B cell (primary cell): ENCODE measurements at regions of chr1 and their contacts with region 1.

Region 1: DNA sequence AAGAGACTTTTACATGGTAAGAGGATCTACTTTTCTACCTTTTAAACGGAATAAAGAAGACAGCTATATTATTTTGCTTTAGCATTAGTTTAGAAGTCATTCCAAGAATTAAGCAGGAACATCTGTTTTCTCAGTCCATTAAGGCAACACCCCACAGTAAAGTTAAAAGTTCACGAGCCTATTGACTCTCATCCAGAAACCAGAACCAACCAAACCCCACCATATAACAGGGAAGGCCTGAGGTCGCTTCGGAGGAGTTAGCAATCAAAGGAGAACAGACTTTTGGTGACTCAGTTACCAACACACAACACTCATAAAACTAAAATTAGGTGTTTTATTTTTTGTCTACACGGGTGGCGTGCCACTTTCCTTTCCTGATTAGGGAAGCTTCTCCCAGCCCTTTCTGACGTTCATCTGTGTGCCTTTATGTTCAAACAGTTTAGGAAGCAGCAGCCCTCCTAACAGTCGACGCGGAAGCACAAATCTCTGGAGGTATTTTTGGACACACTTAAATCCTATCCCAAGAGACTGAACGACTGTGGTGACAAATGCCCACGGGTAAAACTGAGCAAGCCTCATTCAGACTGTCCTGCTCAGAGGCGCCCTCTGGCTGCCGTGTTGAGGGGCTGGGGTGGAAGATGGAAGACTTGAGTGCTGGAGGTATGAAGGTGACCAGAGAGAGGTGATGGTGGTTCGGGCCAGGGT is 8.6 kb upstream of the PLA2G2C start:
- DNase-seq: peak; percentile 76
- ATAC-seq: peak; percentile 91
- H3K4me3 ChIP-seq: no peak overlapping the region
- H3K4me3 Mint-ChIP-seq: peak overlapping the region; percentile 17
- H3K27ac ChIP-seq: no peak overlapping the region
- H3K27ac Mint-ChIP-seq: no peak overlapping the region
- H3K4me1 ChIP-seq: peaks cover 4 to 5% of the 10 kb centered on the region in 2 donors
- H3K4me1 Mint-ChIP-seq: peaks cover 6% of the 10 kb centered on the region
- H3K27me3 ChIP-seq: peaks cover 0 to 30% (median 8%) of the 10 kb centered on the region in 4 experiments
- H3K27me3 Mint-ChIP-seq: peaks cover 34% of the 10 kb centered on the region
- CTCF ChIP-seq: peak; percentile 93

Region 2: GRCh38 chr1:19547814-19548213 is 647.1 kb before region 1 on chr1:
- CTCF ChIA-PET with region 1: no interaction called
- POLR2A ChIA-PET with region 1: no interaction called
- intact Hi-C with region 1: no loop called
- DNase-seq: no peak
- ATAC-seq: no peak
- H3K4me3 ChIP-seq: no peak overlapping the region
- H3K4me3 Mint-ChIP-seq: no peak overlapping the region
- H3K27ac ChIP-seq: no peak overlapping the region
- H3K27ac Mint-ChIP-seq: no peak overlapping the region
- H3K4me1 ChIP-seq: no peaks in the 10 kb centered on the region
- H3K4me1 Mint-ChIP-seq: no peaks in the 10 kb centered on the region
- H3K27me3 ChIP-seq: peaks cover 0 to 4% (median under 1%) of the 10 kb centered on the region in 4 experiments
- H3K27me3 Mint-ChIP-seq: peaks cover 21% of the 10 kb centered on the region
- CTCF ChIP-seq: no peak

Region 3: GRCh38 chr1:19596714-19597495 is 598.0 kb before region 1 on chr1:
- CTCF ChIA-PET with region 1: no interaction called
- POLR2A ChIA-PET with region 1: no interaction called
- intact Hi-C with region 1: no loop called
- DNase-seq: peak; percentile 99
- ATAC-seq: peak; percentile 92
- H3K4me3 ChIP-seq: peak overlapping the region; percentile 58 to 97 (median 80)
- H3K4me3 Mint-ChIP-seq: peak overlapping the region; percentile 98
- H3K27ac ChIP-seq: peak overlapping the region; percentile 93 to 100
- H3K27ac Mint-ChIP-seq: peak overlapping the region; percentile 99
- H3K4me1 ChIP-seq: peaks cover 22 to 30% of the 10 kb centered on the region in 2 donors
- H3K4me1 Mint-ChIP-seq: peaks cover 42% of the 10 kb centered on the region
- H3K27me3 ChIP-seq: no peaks in the 10 kb centered on the region
- H3K27me3 Mint-ChIP-seq: no peaks in the 10 kb centered on the region
- CTCF ChIP-seq: no peak

Region 4: GRCh38 chr1:19974822-19975416 is 220.0 kb before region 1 on chr1:
- CTCF ChIA-PET with region 1: interaction called, 17 read pairs
- POLR2A ChIA-PET with region 1: no interaction called
- intact Hi-C with region 1: loop called (anchors 2 kb)
- DNase-seq: peak; percentile 59
- ATAC-seq: peak; percentile 39
- H3K4me3 ChIP-seq: no peak overlapping the region
- H3K4me3 Mint-ChIP-seq: no peak overlapping the region
- H3K27ac ChIP-seq: no peak overlapping the region
- H3K27ac Mint-ChIP-seq: no peak overlapping the region
- H3K4me1 ChIP-seq: no peaks in the 10 kb centered on the region
- H3K4me1 Mint-ChIP-seq: peaks cover 2% of the 10 kb centered on the region
- H3K27me3 ChIP-seq: peaks cover 0 to 2% (median 0%) of the 10 kb centered on the region in 4 experiments
- H3K27me3 Mint-ChIP-seq: peaks cover 26% of the 10 kb centered on the region
- CTCF ChIP-seq: peak; percentile 48

Region 5: DNA sequence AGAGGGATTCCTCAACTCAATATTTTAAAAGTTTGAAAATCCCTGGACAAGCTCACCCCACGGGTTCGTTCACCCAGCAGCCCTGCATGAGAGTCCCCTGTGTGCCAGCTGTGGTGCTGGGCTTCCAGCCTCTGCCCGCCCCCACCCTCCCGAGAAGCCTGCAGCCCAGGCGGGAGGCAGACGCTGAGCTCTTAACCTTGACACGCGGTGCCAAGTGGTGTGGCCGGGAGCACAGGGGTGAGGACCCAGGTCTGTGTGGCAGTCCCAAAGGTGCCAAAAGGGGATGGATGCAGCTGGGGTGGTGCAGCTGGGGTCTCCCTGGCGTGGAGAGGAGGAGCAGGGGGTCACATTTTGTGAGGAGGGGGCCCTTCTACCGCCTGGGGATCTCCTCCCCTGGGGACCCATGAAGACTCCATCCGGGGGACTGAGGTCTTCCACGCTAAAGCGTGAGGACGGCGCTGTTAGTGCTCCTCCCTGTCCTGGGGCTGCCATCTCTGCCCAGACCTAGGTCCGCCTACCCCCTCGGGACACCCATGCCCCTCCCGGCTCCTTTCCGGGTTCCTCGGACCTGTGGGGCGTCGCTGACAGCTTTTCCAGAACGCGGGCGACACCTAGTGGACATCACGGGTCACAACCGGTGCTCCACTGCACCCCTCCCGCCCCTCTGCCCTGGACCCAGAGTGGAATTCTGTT is 42.9 kb before region 1 on chr1:
- CTCF ChIA-PET with region 1: interaction called, 58 read pairs
- POLR2A ChIA-PET with region 1: no interaction called
- intact Hi-C with region 1: loop called (anchors 1 kb)
- DNase-seq: peak; percentile 86
- ATAC-seq: peak; percentile 97
- H3K4me3 ChIP-seq: peak overlapping the region in 4 of 5 experiments; percentile 52 to 69 (median 60)
- H3K4me3 Mint-ChIP-seq: peak overlapping the region; percentile 86
- H3K27ac ChIP-seq: peak overlapping the region in 1 of 2 donors; percentile 11
- H3K27ac Mint-ChIP-seq: peak overlapping the region; percentile 84
- H3K4me1 ChIP-seq: peaks cover 5 to 15% of the 10 kb centered on the region in 2 donors
- H3K4me1 Mint-ChIP-seq: peaks cover 20% of the 10 kb centered on the region
- H3K27me3 ChIP-seq: no peaks in the 10 kb centered on the region
- H3K27me3 Mint-ChIP-seq: no peaks in the 10 kb centered on the region
- CTCF ChIP-seq: peak; percentile 95

Region 6: DNA sequence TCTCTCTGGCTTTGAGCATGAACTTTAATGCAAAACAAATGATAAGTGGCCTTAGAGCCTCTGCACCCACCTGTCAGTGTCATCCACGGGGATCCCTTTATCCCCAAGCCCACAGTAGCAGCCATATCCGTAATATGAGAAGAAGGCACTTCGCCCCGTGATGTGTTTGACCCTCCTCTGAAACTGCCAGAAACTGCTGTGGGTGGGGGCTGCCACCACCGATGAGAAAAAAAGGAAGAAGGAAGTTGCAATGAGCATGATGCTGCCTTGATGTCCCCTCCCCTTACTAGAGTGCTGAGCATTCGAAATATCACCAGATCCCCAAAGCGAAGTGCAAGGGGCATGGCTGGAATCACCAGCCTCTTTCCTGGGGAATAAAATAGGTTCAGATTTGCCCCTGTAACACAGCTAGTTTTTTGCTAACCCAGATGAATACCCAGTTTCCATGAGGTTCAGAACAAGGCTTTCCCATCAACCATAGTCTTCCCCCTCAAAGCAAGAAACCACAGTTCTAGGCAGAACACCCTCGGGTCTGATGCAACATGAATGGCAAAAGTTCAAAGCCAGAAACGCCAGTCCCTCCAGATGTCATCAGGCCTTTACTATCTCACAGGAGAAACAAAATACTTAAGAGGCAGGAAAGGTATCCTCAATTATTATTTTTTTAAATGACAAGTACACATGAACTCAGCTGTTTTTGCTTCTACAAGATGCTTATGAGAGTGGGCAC is 19.8 kb before region 1 on chr1:
- CTCF ChIA-PET with region 1: interaction called, 32 read pairs
- POLR2A ChIA-PET with region 1: no interaction called
- intact Hi-C with region 1: loop called (anchors 2 kb)
- DNase-seq: no peak
- ATAC-seq: no peak
- H3K4me3 ChIP-seq: no peak overlapping the region
- H3K4me3 Mint-ChIP-seq: no peak overlapping the region
- H3K27ac ChIP-seq: no peak overlapping the region
- H3K27ac Mint-ChIP-seq: no peak overlapping the region
- H3K4me1 ChIP-seq: peaks cover 14 to 23% of the 10 kb centered on the region in 2 donors
- H3K4me1 Mint-ChIP-seq: peaks cover 22% of the 10 kb centered on the region
- H3K27me3 ChIP-seq: peaks cover 0 to 7% (median 0%) of the 10 kb centered on the region in 4 experiments
- H3K27me3 Mint-ChIP-seq: peaks cover under 1% of the 10 kb centered on the region
- CTCF ChIP-seq: no peak